T-cell (primary cell): ENCODE measurements at regions of chr6 and their contacts with region 1.

Region 1: DNA sequence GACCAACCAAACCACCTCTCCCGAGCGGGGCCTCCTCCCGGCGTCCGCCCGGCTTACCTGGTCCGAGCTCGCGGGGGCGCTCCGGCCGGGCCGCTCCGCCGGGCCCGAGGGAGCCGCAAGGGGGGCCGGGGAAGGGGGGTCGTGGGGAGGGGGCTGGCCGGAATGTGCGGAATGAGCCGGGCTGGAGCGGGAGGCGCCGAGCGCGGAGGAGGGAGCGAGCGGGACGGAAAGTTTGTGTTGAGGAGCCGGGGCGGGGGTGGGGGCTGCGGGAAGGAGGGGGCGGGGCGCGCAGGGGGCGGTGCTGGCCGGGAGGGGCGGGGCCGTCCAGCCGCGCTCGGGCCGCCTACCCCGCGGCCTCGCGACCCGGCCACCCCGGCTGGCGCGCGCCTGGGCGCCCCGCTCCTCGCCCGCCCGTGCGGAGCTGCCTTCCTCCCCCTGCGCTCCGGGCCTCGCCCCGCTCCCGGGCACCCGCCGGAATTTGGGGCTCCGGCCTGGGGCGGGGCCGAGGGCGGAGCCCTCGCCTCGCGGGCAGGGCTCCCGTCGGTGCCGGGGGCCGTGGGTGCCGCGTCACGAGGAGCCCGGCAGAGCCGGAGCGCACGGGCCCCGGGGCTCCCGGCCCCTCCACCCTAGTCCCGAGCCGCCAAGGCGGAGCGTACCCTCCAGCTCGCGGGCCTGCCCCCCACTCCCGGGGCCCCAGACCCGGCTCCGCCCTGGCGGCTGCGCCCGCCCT is at the start of gene TEAD3:
- DNase-seq: peak in 23 of 35 experiments; percentile 7 to 67 (median 26)
- ATAC-seq: peak; percentile 76 to 78 (median 77)
- H3K4me3 ChIP-seq: peak within 1 kb of the TSS; percentile 58 to 79
- H3K4me3 Mint-ChIP-seq: peak within 1 kb of the TSS; percentile 73 to 81 (median 74)
- H3K27ac ChIP-seq: no peak within 1 kb of the TSS
- H3K27ac Mint-ChIP-seq: no peak within 1 kb of the TSS
- H3K4me1 ChIP-seq: peaks cover 0 to 27% of the 10 kb centered on the region in 2 experiments
- H3K4me1 Mint-ChIP-seq: peaks cover 17 to 22% (median 19%) of the 10 kb centered on the region in 3 donors
- H3K27me3 ChIP-seq: peaks cover 0 to 34% of the 10 kb centered on the region in 2 experiments
- H3K27me3 Mint-ChIP-seq: peaks cover 0 to 20% of the 10 kb centered on the region in 2 donors
- total RNA-seq, gene TEAD3: 0.26 to 0.53 (median 0.41) TPM in 3 of 5 donors, not detected in the others

Region 2: GRCh38 chr6:35651244-35651643 is 154.2 kb after region 1 on chr6:
- CTCF ChIA-PET with region 1: no interaction called
- POLR2A ChIA-PET with region 1: interaction called in 1 of 2 experiments, 12 read pairs
- DNase-seq: no peak
- ATAC-seq: no peak
- H3K4me3 ChIP-seq: no peak overlapping the region
- H3K4me3 Mint-ChIP-seq: no peak overlapping the region
- H3K27ac ChIP-seq: no peak overlapping the region
- H3K27ac Mint-ChIP-seq: peak overlapping the region; percentile 49 to 68
- H3K4me1 ChIP-seq: peaks cover 6 to 10% of the 10 kb centered on the region in 2 experiments
- H3K4me1 Mint-ChIP-seq: peaks cover 54 to 78% (median 73%) of the 10 kb centered on the region in 3 donors
- H3K27me3 ChIP-seq: no peaks in the 10 kb centered on the region
- H3K27me3 Mint-ChIP-seq: no peaks in the 10 kb centered on the region